A549 (cell line): ENCODE measurements at regions of chr2 and their contacts with region 1.

Region 1: GRCh38 chr2:96407041-96407918 is 71.7 kb downstream of the NCAPH start:
- DNase-seq: peak; percentile 80 to 87
- ATAC-seq: peak; percentile 80 to 88
- H3K4me3 ChIP-seq: no peak overlapping the region
- H3K27ac ChIP-seq: peak overlapping the region in 1 of 2 experiments; percentile 68; a peak in 2 of 6 replicates
- H3K4me1 ChIP-seq: peaks cover 35% of the 10 kb centered on the region
- CTCF ChIP-seq: peak; percentile 78
- EP300 ChIP-seq: no peak
- POLR2A ChIP-seq: no peak
- RAD21 ChIP-seq: peak; percentile 78 to 83

Region 2: DNA sequence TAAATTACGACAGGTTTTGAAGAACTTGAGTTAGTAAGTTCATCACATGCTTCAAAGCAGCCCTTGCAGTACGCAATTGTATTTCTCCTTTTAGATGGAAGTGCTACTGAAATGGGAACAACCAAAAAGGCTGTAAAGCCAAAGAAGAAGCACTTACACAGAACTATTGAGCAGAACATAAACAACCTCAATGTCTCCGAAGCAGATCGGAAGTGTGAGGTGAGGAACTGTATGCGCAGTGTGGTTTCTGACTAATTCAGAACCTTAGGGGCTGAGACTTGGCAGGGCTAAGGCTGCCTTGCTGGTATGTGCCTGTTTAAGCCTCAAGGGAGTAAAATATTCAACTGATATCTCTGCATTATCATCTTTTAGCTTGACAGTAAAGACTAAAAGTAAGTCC is 63.3 kb before region 1 on chr2:
- CTCF ChIA-PET with region 1: interaction called, 16 read pairs
- POLR2A ChIA-PET with region 1: no interaction called
- DNase-seq: no peak
- ATAC-seq: no peak
- H3K4me3 ChIP-seq: no peak overlapping the region
- H3K27ac ChIP-seq: no peak overlapping the region
- H3K4me1 ChIP-seq: peaks cover 30% of the 10 kb centered on the region
- CTCF ChIP-seq: no peak
- EP300 ChIP-seq: no peak
- POLR2A ChIP-seq: no peak
- RAD21 ChIP-seq: no peak

Region 3: GRCh38 chr2:96389736-96390135 is 17.5 kb before region 1 on chr2:
- CTCF ChIA-PET with region 1: interaction called, 22 read pairs
- POLR2A ChIA-PET with region 1: no interaction called
- DNase-seq: no peak
- ATAC-seq: no peak
- H3K4me3 ChIP-seq: no peak overlapping the region
- H3K27ac ChIP-seq: no peak overlapping the region
- H3K4me1 ChIP-seq: no peaks in the 10 kb centered on the region
- CTCF ChIP-seq: no peak
- EP300 ChIP-seq: no peak
- POLR2A ChIP-seq: no peak
- RAD21 ChIP-seq: no peak

Region 4: GRCh38 chr2:96396095-96396494 is 11.2 kb before region 1 on chr2:
- CTCF ChIA-PET with region 1: interaction called, 22 read pairs
- POLR2A ChIA-PET with region 1: no interaction called
- DNase-seq: no peak
- ATAC-seq: no peak
- H3K4me3 ChIP-seq: no peak overlapping the region
- H3K27ac ChIP-seq: no peak overlapping the region
- H3K4me1 ChIP-seq: no peaks in the 10 kb centered on the region
- CTCF ChIP-seq: no peak
- EP300 ChIP-seq: no peak
- POLR2A ChIP-seq: no peak
- RAD21 ChIP-seq: no peak

Region 5: GRCh38 chr2:96423828-96424227 is 16.5 kb after region 1 on chr2:
- CTCF ChIA-PET with region 1: interaction called, 31 read pairs
- POLR2A ChIA-PET with region 1: no interaction called
- DNase-seq: no peak
- ATAC-seq: no peak
- H3K4me3 ChIP-seq: no peak overlapping the region
- H3K27ac ChIP-seq: peak overlapping the region in 1 of 2 experiments; percentile 5; a peak in 1 of 6 replicates
- H3K4me1 ChIP-seq: peaks cover 27% of the 10 kb centered on the region
- CTCF ChIP-seq: no peak
- EP300 ChIP-seq: no peak
- POLR2A ChIP-seq: no peak
- RAD21 ChIP-seq: no peak

Region 6: GRCh38 chr2:96485751-96486651 is 78.7 kb after region 1 on chr2:
- CTCF ChIA-PET with region 1: interaction called, 10 read pairs
- POLR2A ChIA-PET with region 1: no interaction called
- DNase-seq: no peak
- ATAC-seq: peak; percentile 13 to 39; a peak in 3 of 6 replicates
- H3K4me3 ChIP-seq: no peak overlapping the region
- H3K27ac ChIP-seq: no peak overlapping the region
- H3K4me1 ChIP-seq: no peaks in the 10 kb centered on the region
- CTCF ChIP-seq: no peak
- EP300 ChIP-seq: no peak
- POLR2A ChIP-seq: no peak
- RAD21 ChIP-seq: no peak